Common myeloid progenitor, CD34-positive (primary cell): ENCODE measurements at regions of chr5 and their contacts with region 1.

Region 1: DNA sequence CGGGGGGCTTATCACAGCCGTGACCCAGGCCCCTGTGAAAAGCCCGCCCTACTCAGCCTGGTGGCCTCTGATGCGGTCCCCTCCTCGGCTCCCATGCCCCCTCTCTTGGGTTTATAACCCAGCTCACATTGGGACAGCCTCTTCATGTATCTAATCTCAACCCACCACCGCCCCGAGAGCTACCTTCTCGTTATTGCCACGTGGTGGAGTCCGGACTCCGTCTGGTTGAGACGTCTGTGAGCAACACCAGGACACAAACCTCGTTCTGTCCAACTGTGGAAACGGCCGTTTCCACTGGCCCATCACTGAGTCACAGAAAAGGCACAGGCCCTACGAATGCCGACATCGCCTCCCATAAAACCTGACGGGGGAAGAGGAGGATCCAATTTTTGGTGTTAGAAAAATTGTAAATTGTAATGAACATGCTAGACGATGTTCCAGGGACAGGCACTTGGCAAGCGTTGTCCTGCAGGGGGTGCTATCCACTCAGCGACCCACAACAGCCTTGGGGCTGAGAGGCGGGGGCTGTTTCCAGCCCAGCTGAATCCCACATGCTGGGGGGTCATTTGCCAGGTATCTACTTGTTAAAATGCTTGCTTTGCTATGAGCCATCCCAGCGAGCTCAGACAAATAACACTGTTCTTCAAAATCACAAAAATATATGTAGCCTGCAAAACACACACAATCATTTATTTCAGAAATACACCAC is 37.3 kb upstream of the N4BP3 start:
- DNase-seq: peak; percentile 72 to 82 (median 79)
- H3K4me3 ChIP-seq: peak overlapping the region in 3 of 7 experiments; percentile 8 to 65 (median 49)
- H3K27ac ChIP-seq: no peak overlapping the region
- H3K4me1 ChIP-seq: peaks cover 0 to 6% (median 5%) of the 10 kb centered on the region in 4 experiments
- H3K27me3 ChIP-seq: peaks cover 0 to 5% (median 1%) of the 10 kb centered on the region in 5 experiments

Region 2: GRCh38 chr5:178106556-178107250 is 30.7 kb after region 1 on chr5:
- CTCF ChIA-PET with region 1: interaction called, 16 read pairs
- POLR2A ChIA-PET with region 1: no interaction called
- DNase-seq: no peak
- H3K4me3 ChIP-seq: no peak overlapping the region
- H3K27ac ChIP-seq: no peak overlapping the region
- H3K4me1 ChIP-seq: peaks cover 4 to 15% (median 10%) of the 10 kb centered on the region in 4 experiments
- H3K27me3 ChIP-seq: no peaks in the 10 kb centered on the region

Region 3: DNA sequence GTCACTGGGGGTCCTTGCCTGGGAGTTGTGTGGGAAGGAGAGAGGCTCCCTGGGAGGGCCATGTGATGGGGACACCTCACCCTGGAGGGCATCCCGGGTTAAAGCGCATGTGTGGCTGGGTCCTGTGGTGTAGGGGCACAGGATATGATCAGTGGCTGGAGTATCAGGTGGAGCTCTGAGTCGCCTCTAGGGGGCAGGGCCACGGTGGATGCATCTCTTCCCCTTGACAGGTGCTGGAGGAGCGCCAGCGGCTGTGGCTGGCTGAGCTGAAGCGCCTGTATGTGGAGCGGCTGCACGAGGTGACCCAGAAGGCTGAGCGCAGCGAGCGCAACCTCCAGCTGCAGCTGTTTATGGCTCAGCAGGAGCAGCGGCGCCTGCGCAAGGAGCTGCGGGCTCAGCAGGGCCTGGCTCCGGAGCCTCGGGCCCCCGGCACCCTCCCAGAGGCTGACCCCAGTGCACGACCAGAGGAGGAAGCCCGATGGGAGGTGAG is 44.9 kb after region 1 on chr5:
- CTCF ChIA-PET with region 1: interaction called, 137 read pairs
- POLR2A ChIA-PET with region 1: interaction called, 3 read pairs
- DNase-seq: peak; percentile 93 to 97 (median 97)
- H3K4me3 ChIP-seq: peak overlapping the region in 1 of 7 experiments; percentile 28
- H3K27ac ChIP-seq: no peak overlapping the region
- H3K4me1 ChIP-seq: peaks cover 6 to 78% (median 64%) of the 10 kb centered on the region in 4 experiments
- H3K27me3 ChIP-seq: peaks cover 0 to 20% (median 7%) of the 10 kb centered on the region in 5 experiments

Region 4: DNA sequence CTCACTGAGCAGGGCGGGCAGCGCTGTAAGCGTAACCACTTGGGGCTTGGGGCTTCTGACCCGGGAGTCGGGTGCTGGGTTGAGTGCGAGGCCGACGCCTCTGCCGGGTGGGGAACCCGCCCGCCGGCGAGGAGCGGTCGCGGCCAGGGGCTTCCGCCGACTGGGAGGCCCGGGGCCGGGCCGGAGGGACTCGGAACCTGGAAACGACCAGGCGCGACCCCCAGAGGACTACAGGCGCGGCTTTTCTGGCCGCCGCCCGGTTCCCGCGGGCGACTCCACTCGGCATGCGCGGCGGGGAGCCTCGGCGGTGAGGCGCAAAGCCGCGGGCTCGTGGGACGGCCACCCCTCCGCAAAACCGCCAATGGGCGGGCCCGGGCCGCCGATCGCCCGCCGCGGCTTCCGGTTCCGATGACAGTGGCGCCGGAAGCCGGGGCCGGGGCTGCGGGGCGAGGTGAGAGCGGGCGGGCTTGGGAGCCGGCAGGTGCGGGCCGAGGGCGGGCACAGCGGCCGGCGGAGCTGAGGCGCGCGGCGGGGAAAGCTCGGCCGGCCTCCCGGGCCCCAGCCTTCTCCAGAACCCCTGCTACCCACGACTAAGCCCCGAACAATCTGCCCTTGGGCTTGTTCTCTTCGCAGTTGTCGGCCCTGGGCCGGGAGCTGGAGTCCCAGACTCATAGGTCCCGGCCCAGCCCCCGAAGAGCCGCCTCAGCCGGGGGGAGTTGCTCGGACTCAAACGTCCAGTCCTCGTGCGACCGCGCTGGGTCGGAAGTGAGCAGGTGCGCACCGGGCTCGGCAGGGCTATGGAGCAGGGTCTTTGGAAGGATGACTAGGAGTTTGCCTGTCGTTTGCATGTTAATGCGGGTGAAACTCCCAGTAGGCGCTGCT is 54.9 kb after region 1 on chr5 and contains the start of gene RMND5B:
- CTCF ChIA-PET with region 1: interaction called, 38 read pairs
- POLR2A ChIA-PET with region 1: no interaction called
- DNase-seq: peak; percentile 80 to 89 (median 84)
- H3K4me3 ChIP-seq: peak within 1 kb of the TSS; percentile 43 to 86 (median 72)
- H3K27ac ChIP-seq: peak within 1 kb of the TSS in 1 of 2 experiments; percentile 73
- H3K4me1 ChIP-seq: peaks cover 0 to 35% (median 28%) of the 10 kb centered on the region in 4 experiments
- H3K27me3 ChIP-seq: no peaks in the 10 kb centered on the region

Region 5: DNA sequence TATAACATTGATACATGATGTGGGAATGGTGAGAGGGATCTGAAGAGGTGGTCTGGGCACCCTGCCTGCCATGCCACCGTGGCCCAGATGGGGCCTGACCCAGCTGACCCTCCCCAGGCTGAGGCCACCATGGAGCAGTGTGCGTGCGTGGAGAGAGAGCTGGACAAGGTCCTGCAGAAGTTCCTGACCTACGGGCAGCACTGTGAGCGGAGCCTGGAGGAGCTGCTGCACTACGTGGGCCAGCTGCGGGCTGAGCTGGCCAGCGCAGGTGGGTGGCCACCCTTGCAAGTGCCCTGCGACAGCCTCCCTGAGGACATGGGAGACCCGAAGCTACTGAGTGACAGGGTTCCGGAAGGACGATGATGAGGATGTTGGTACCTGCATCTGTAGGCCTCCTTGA is 62.0 kb after region 1 on chr5:
- CTCF ChIA-PET with region 1: interaction called, 458 read pairs
- POLR2A ChIA-PET with region 1: no interaction called
- DNase-seq: no peak
- H3K4me3 ChIP-seq: no peak overlapping the region
- H3K27ac ChIP-seq: no peak overlapping the region
- H3K4me1 ChIP-seq: no peaks in the 10 kb centered on the region
- H3K27me3 ChIP-seq: no peaks in the 10 kb centered on the region

Region 6: DNA sequence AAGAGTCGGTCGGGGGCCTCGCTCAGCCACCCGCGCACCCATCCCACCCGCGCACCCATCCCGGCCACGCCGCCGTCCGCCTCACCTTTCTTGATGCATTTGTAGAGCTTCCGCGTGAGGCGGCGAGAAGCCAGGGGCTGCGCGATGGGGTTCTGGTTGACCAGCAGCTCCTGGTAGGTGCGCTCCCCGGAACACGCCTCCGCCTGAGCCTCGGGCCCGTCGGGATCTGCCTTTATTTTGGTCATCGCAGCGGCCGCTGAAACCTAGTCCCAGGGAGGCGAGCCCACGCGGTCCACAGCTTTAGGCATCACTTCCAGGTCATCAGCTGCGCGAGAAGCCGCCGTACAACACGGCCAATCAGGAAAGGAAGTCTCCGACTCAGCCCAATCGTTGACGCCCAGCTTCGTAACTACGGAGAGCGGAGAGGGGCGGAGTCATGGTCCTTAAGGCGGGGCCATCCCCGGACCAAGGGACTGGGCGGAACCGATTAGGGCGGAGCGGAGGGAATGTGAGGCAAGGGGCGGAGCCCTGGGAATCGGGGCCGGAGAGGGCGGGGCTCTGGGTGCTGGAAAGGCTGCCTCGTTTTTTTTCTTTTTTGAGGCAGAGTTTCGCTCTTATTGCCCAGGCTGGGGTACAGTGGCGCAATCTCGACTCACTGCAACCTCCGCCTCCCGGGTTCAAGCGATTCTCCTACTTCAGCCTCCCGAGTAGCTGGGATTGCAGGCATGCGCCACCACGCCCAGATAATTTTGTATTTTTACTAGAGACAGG is 77.8 kb after region 1 on chr5 and contains the start of gene NHP2:
- CTCF ChIA-PET with region 1: interaction called, 458 read pairs
- POLR2A ChIA-PET with region 1: interaction called, 3 read pairs
- DNase-seq: peak; percentile 97 to 99 (median 99)
- H3K4me3 ChIP-seq: peak within 1 kb of the TSS; percentile 66 to 93 (median 82)
- H3K27ac ChIP-seq: peak within 1 kb of the TSS; percentile 40 to 67
- H3K4me1 ChIP-seq: peaks cover 3 to 19% (median 14%) of the 10 kb centered on the region in 4 experiments
- H3K27me3 ChIP-seq: no peaks in the 10 kb centered on the region

Region 7: DNA sequence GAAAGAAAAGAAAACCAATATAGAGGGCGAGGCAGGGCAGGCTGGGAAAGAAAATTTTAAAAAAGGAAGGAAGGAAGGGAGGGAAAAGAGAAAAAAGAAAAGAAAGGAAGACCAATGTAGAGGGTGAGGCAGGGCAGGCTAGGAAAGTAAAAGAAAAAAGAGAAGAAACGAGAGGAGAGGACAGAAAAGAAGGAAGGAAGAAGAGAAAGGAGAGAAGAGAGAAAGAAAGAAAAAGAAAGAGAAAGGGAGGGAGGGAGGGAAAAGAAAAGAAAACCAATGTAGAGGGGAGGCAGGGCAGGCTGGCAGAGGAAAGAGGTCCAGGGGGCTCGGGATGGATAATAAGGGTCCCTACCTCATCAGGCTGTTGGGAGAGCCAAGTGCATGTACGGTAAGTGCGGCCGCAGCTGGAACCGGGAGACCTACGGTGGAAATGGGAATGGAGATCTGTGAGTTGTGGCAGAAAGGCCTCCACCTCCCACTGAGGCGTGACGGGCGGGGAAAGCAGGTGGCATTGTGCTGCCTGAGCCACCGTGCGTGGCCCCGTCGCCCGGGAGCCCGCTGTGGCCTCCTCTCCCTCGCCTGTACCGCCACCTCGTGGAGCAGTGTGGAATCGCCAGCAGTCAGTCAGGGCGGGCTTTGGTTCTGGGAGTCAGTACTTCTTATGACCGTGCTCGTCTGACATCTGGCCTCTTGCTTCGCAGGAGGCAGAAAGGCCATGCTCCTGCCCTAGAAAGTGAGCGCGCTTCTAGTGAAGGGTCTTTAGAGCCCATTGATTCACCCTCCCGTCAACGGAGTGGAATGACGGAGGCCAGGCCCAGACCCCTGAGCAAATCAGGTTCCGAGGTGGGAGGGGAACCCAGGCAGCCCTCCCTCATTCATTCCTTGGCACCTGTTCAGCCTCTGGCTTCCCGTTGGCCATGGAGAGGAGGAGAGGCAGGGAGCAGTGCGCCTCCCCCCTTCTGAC is 88.1 kb after region 1 on chr5:
- CTCF ChIA-PET with region 1: interaction called, 458 read pairs
- POLR2A ChIA-PET with region 1: no interaction called
- DNase-seq: peak; percentile 84 to 91 (median 89)
- H3K4me3 ChIP-seq: peak overlapping the region in 5 of 7 experiments; percentile 19 to 63 (median 57)
- H3K27ac ChIP-seq: no peak overlapping the region
- H3K4me1 ChIP-seq: peaks cover 0 to 10% (median 6%) of the 10 kb centered on the region in 4 experiments
- H3K27me3 ChIP-seq: peaks cover 0 to 8% (median 0%) of the 10 kb centered on the region in 5 experiments

Region 8: DNA sequence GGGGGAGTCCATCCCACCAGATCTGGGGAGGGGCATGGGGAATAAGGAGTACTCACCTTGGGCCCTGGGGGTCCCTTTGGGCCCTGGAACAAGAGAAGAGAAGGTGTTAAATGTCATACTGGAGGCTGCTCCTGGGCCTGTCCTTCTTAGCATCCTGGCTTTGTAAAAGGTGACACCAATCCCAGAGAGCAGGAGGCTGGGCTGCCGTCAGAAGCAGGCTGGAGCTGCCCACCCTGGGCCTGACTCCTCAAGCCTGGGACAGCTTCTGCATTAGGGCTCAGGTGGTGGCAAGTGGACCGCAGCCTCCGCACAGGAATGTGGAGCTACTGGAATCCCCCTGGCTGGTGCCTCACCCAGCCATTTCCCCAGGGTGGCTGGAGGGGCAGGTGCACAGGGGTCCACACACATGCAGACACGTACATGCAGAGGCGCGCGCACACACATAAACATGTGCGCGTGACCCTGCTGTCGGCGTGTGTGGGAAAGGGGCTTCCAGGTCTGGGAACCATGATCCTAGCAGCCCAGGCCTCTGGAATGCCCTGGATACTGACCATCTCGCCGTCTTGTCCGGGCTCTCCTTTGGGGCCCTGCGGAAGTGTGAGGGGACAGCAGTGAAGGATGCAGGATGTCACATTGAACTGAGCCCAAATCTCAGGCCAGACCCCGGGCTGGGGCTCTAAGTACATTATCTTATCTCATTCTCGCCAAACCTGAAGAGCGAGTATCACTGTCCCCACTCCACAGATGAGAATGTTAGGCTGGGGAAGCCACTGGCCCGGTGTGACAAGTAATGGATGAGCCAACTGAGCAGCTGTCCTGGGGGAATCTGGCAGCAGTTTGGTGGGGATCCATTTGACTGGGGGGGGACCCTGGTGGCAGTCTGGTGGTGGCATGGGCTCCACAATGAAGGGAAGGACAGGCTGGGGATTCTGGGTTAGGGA is 185.9 kb after region 1 on chr5:
- CTCF ChIA-PET with region 1: no interaction called
- POLR2A ChIA-PET with region 1: no interaction called
- DNase-seq: no peak
- H3K4me3 ChIP-seq: no peak overlapping the region
- H3K27ac ChIP-seq: no peak overlapping the region
- H3K4me1 ChIP-seq: no peaks in the 10 kb centered on the region
- H3K27me3 ChIP-seq: no peaks in the 10 kb centered on the region